ENCODE measurements at regions of chr7 and their contacts with region 1.

Region 1: GRCh38 chr7:5704534-5704922 is 76.9 kb downstream of the RNF216 start:
- DNase-seq: peak; percentile 62 to 85 (median 70)
- ATAC-seq: peak; percentile 96
- H3K4me3 ChIP-seq: no peak overlapping the region
- H3K27ac ChIP-seq: no peak overlapping the region; the same call in 2 of the 3 replicates
- H3K4me1 ChIP-seq: peaks cover 0 to 3% of the 10 kb centered on the region in 2 experiments; a peak in 3 of 5 replicates
- H3K27me3 ChIP-seq: no peaks in the 10 kb centered on the region
- CTCF ChIP-seq: peak; percentile 78 to 95 (median 91)
- EP300 ChIP-seq: no peak
- POLR2A ChIP-seq: no peak
- RAD21 ChIP-seq: peak; percentile 80 to 89

Region 2: GRCh38 chr7:5580714-5581395 is 123.7 kb before region 1 on chr7:
- CTCF ChIA-PET with region 1: no interaction called
- POLR2A ChIA-PET with region 1: no interaction called
- in situ Hi-C with region 1: no loop called
- intact Hi-C with region 1: no loop called
- DNase-seq: peak in 1 of 4 experiments; percentile 11
- ATAC-seq: no peak
- H3K4me3 ChIP-seq: no peak overlapping the region
- H3K27ac ChIP-seq: no peak overlapping the region
- H3K4me1 ChIP-seq: peaks cover 10 to 32% of the 10 kb centered on the region in 2 experiments
- H3K27me3 ChIP-seq: no peaks in the 10 kb centered on the region
- CTCF ChIP-seq: no peak
- EP300 ChIP-seq: no peak
- POLR2A ChIP-seq: no peak
- RAD21 ChIP-seq: no peak

Region 3: DNA sequence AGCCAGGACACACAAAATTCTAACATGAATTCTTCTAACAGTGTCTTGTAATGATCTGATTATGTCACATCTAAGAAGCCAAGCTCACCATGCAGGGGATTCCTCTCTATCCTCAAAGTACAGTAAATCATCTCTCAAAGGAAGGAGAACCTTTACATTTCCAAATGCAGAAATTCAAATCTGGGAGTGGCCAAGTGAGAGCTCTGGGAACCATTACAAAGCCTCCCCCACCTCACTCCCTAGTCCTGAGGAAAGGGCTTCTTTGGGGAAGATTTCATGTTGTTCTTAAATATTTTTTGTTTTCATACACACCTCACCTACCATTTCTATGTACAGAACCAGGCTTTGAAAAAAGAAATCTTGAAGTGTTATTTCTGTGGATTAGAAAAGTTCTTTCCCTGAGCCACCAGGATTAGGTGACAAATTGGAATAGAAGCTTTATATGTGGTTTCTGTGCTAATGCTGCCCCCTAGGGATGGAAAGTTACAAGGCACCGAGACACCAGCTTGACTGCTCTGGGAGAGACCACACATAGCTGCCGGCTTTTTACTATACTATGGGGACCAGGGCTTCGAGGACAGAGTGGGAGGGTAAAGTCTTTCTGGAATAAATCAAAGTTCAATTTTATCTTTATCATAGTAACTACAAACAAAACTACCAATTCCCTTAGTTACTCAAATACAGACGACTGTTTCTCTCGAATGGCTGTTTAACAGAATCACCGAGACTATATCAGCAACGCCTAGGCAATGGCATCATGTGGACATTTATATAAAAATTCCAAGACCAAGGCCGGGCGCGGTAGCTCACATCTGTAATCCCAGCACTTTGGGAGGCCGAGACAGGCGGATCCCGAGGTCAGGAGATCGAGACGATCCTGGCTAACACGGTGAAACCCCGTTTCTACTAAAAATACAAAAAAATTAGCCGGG is 39.2 kb before region 1 on chr7:
- CTCF ChIA-PET with region 1: interaction called, 6 read pairs
- POLR2A ChIA-PET with region 1: no interaction called
- in situ Hi-C with region 1: no loop called
- intact Hi-C with region 1: loop called (anchors 2 kb)
- DNase-seq: peak; percentile 71 to 88 (median 77)
- ATAC-seq: peak; percentile 96
- H3K4me3 ChIP-seq: no peak overlapping the region
- H3K27ac ChIP-seq: no peak overlapping the region
- H3K4me1 ChIP-seq: peaks cover 5 to 13% of the 10 kb centered on the region in 2 experiments; a peak in 4 of 5 replicates
- H3K27me3 ChIP-seq: no peaks in the 10 kb centered on the region
- CTCF ChIP-seq: peak; percentile 84 to 89 (median 85)
- EP300 ChIP-seq: 0 out of 2 replicates have a peak, but pooled peaks have one; percentile 10
- POLR2A ChIP-seq: no peak
- RAD21 ChIP-seq: peak; percentile 94 to 97

Region 4: GRCh38 chr7:5822742-5823503 is 118.4 kb after region 1 on chr7:
- CTCF ChIA-PET with region 1: no interaction called
- POLR2A ChIA-PET with region 1: no interaction called
- in situ Hi-C with region 1: no loop called
- intact Hi-C with region 1: loop called (anchors 10 kb)
- DNase-seq: peak; percentile 92 to 97 (median 92)
- ATAC-seq: peak; percentile 100
- H3K4me3 ChIP-seq: peak overlapping the region; percentile 53
- H3K27ac ChIP-seq: peak overlapping the region; percentile 83
- H3K4me1 ChIP-seq: peaks cover 4 to 19% of the 10 kb centered on the region in 2 experiments; a peak in 4 of 5 replicates
- H3K27me3 ChIP-seq: no peaks in the 10 kb centered on the region
- CTCF ChIP-seq: 0 out of 6 replicates have a peak, but pooled peaks of 1 of the 3 experiments have one; percentile 6
- EP300 ChIP-seq: no peak
- POLR2A ChIP-seq: peak; percentile 80
- RAD21 ChIP-seq: no peak

Measured in K562 (cell line).